SK-N-SH (cell line): ENCODE measurements at regions of chr13 and their contacts with region 1.

Region 1: GRCh38 chr13:81872581-81872980 is 1531.7 kb upstream of the SPRY2 start:
- DNase-seq: peak; percentile 8
- H3K4me3 ChIP-seq: peak overlapping the region in 1 of 2 experiments; percentile 43; a peak in 1 of 4 replicates
- H3K27ac ChIP-seq: no peak overlapping the region
- H3K4me1 ChIP-seq: no peaks in the 10 kb centered on the region
- H3K27me3 ChIP-seq: no peaks in the 10 kb centered on the region
- CTCF ChIP-seq: no peak
- EP300 ChIP-seq: no peak
- RAD21 ChIP-seq: peak; percentile 67

Region 2: DNA sequence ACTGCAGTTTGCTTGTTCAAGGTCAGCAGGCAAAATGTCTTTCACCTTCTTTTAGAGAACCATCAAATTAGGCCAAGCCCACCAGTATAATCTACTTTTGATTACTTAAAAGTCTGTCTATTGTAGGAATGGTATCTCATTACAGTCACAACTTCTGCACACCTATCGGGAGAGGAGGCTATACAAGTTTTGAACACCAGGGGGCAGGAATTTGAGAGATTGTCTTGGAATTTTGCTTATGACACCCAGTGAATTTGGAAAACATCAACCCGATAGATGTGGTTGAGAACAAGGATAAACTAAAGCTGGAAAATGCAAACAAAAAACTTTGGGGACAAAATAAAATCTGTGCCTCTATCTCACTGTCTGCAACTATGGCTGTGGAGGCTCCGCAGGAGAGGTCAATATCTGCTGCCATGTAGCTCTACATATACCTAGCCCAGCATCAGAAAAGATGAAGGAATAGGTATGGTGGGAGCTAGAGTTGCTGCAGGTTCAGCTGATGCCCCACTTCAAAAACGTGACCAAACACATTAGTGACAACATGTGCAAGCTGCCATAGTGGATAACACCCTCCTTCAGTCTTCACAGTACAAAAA is 232.5 kb before region 1 on chr13:
- CTCF ChIA-PET with region 1: interaction called, 19 read pairs
- POLR2A ChIA-PET with region 1: no interaction called
- DNase-seq: peak; percentile 8
- H3K4me3 ChIP-seq: no peak overlapping the region
- H3K27ac ChIP-seq: no peak overlapping the region
- H3K4me1 ChIP-seq: no peaks in the 10 kb centered on the region
- H3K27me3 ChIP-seq: no peaks in the 10 kb centered on the region
- CTCF ChIP-seq: peak; percentile 68
- EP300 ChIP-seq: no peak
- RAD21 ChIP-seq: peak; percentile 53